Caco-2 (cell line): ENCODE measurements at regions of chr3 and their contacts with region 1.

Region 1: GRCh38 chr3:150408221-150409102 is at the start of gene TSC22D2:
- DNase-seq: peak; percentile 94 to 97
- H3K4me3 ChIP-seq: peak within 1 kb of the TSS; percentile 99
- H3K4me3 Mint-ChIP-seq: peak within 1 kb of the TSS; percentile 97
- H3K27ac Mint-ChIP-seq: peak within 1 kb of the TSS; percentile 99
- H3K4me1 ChIP-seq: peaks cover 8% of the 10 kb centered on the region
- H3K4me1 Mint-ChIP-seq: peaks cover 6% of the 10 kb centered on the region
- H3K27me3 ChIP-seq: no peaks in the 10 kb centered on the region
- H3K27me3 Mint-ChIP-seq: no peaks in the 10 kb centered on the region
- CTCF ChIP-seq: no peak
- total RNA-seq, gene TSC22D2: 30.8 and 33.6 TPM in 2 replicates

Region 2: GRCh38 chr3:150286390-150287147 is 121.9 kb before region 1 on chr3:
- CTCF ChIA-PET with region 1: interaction called, 3 read pairs
- POLR2A ChIA-PET with region 1: no interaction called
- intact Hi-C with region 1: loop called (anchors 1 kb)
- DNase-seq: peak in 1 of 2 experiments; percentile 51
- H3K4me3 ChIP-seq: no peak overlapping the region
- H3K4me3 Mint-ChIP-seq: no peak overlapping the region
- H3K27ac Mint-ChIP-seq: peak overlapping the region; percentile 77
- H3K4me1 ChIP-seq: peaks cover 12% of the 10 kb centered on the region
- H3K4me1 Mint-ChIP-seq: no peaks in the 10 kb centered on the region
- H3K27me3 ChIP-seq: no peaks in the 10 kb centered on the region
- H3K27me3 Mint-ChIP-seq: no peaks in the 10 kb centered on the region
- CTCF ChIP-seq: peak; percentile 57 to 71

Region 3: DNA sequence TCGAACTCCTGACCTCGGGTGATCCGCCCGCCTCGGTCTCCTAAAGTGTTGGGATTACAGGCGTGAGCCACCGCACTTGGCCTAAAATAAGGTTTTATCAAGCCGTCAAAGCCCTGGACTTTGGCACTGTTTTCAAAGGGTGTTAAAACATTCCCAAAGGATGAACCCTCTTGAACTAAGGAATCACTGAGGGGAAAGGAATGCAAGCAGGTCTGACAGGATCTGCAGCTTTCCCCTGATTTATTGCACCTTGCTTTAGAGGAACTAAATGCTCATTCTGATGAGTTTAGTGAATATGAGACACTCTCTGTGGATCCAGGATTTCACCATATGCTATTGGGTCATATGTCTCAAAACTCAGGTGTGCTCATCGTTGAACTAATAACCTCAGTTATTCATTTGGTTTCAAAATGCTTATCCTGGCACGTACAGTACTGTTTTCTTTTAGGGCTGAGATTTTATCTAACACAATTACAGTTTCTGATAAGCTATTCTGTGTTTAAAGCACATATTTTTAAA is 63.4 kb before region 1 on chr3:
- CTCF ChIA-PET with region 1: no interaction called
- POLR2A ChIA-PET with region 1: interaction called, 4 read pairs
- intact Hi-C with region 1: loop called (anchors 1 kb)
- DNase-seq: peak; percentile 92 to 95
- H3K4me3 ChIP-seq: no peak overlapping the region
- H3K4me3 Mint-ChIP-seq: peak overlapping the region; percentile 58
- H3K27ac Mint-ChIP-seq: peak overlapping the region; percentile 66
- H3K4me1 ChIP-seq: peaks cover 57% of the 10 kb centered on the region
- H3K4me1 Mint-ChIP-seq: peaks cover 40% of the 10 kb centered on the region
- H3K27me3 ChIP-seq: no peaks in the 10 kb centered on the region
- H3K27me3 Mint-ChIP-seq: no peaks in the 10 kb centered on the region
- CTCF ChIP-seq: no peak

Region 4: GRCh38 chr3:150439657-150440056 is 31.2 kb after region 1 on chr3:
- CTCF ChIA-PET with region 1: no interaction called
- POLR2A ChIA-PET with region 1: interaction called, 13 read pairs
- intact Hi-C with region 1: no loop called
- DNase-seq: no peak
- H3K4me3 ChIP-seq: no peak overlapping the region
- H3K4me3 Mint-ChIP-seq: no peak overlapping the region
- H3K27ac Mint-ChIP-seq: no peak overlapping the region
- H3K4me1 ChIP-seq: no peaks in the 10 kb centered on the region
- H3K4me1 Mint-ChIP-seq: no peaks in the 10 kb centered on the region
- H3K27me3 ChIP-seq: no peaks in the 10 kb centered on the region
- H3K27me3 Mint-ChIP-seq: no peaks in the 10 kb centered on the region
- CTCF ChIP-seq: no peak

Region 5: GRCh38 chr3:150495563-150496168 is 87.2 kb after region 1 on chr3:
- CTCF ChIA-PET with region 1: interaction called, 21 read pairs
- POLR2A ChIA-PET with region 1: interaction called, 3 read pairs
- intact Hi-C with region 1: loop called (anchors 1 kb)
- DNase-seq: peak in 1 of 2 experiments; percentile 42
- H3K4me3 ChIP-seq: no peak overlapping the region
- H3K4me3 Mint-ChIP-seq: no peak overlapping the region
- H3K27ac Mint-ChIP-seq: no peak overlapping the region
- H3K4me1 ChIP-seq: no peaks in the 10 kb centered on the region; the same call in 1 of the 2 replicates
- H3K4me1 Mint-ChIP-seq: no peaks in the 10 kb centered on the region
- H3K27me3 ChIP-seq: no peaks in the 10 kb centered on the region
- H3K27me3 Mint-ChIP-seq: no peaks in the 10 kb centered on the region
- CTCF ChIP-seq: peak; percentile 62